IMR-90 (cell line): ENCODE measurements at regions of chr9 and their contacts with region 1.

Region 1: GRCh38 chr9:115328228-115328627 is 210.3 kb upstream of the TNC start:
- DNase-seq: peak; percentile 76
- ATAC-seq: peak; percentile 75
- H3K4me3 ChIP-seq: no peak overlapping the region
- H3K27ac ChIP-seq: peak overlapping the region; percentile 48; the same call in 1 of the 2 replicates
- H3K4me1 ChIP-seq: peaks cover 6% of the 10 kb centered on the region
- H3K27me3 ChIP-seq: no peaks in the 10 kb centered on the region
- CTCF ChIP-seq: no peak
- POLR2A ChIP-seq: no peak
- RAD21 ChIP-seq: no peak

Region 2: GRCh38 chr9:115164511-115164974 is 163.7 kb before region 1 on chr9:
- CTCF ChIA-PET with region 1: no interaction called
- POLR2A ChIA-PET with region 1: no interaction called
- dilution Hi-C with region 1: no loop called
- in situ Hi-C with region 1: no loop called
- intact Hi-C with region 1: no loop called
- DNase-seq: peak; percentile 33
- ATAC-seq: no peak
- H3K4me3 ChIP-seq: no peak overlapping the region
- H3K27ac ChIP-seq: no peak overlapping the region
- H3K4me1 ChIP-seq: peaks cover 5% of the 10 kb centered on the region; the same call in 1 of the 2 replicates
- H3K27me3 ChIP-seq: no peaks in the 10 kb centered on the region
- CTCF ChIP-seq: no peak
- POLR2A ChIP-seq: no peak
- RAD21 ChIP-seq: no peak

Region 3: DNA sequence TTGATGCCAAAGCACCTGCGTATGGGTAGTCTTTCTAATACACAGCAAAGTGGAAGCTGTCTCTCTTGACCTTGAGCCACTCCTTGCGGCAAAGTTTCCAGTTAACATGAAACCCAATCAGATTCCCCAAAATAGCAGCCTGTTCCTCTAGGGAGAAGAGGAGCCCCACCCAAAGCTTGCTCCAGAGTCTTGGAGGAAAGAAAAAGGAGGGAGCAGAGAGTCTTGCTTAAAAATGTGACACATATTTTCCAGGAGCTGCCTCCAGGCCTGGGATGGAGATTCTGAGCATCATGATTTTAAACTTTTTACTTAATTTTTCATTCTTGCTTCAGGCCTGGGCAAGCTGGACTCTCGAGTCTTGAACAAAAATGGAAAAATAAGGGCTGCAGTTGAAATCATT is 13.2 kb after region 1 on chr9:
- CTCF ChIA-PET with region 1: no interaction called
- POLR2A ChIA-PET with region 1: interaction called, 12 read pairs
- dilution Hi-C with region 1: no loop called
- in situ Hi-C with region 1: no loop called
- intact Hi-C with region 1: no loop called
- DNase-seq: no peak
- ATAC-seq: no peak
- H3K4me3 ChIP-seq: no peak overlapping the region
- H3K27ac ChIP-seq: no peak overlapping the region
- H3K4me1 ChIP-seq: no peaks in the 10 kb centered on the region
- H3K27me3 ChIP-seq: peaks cover 13% of the 10 kb centered on the region
- CTCF ChIP-seq: no peak
- POLR2A ChIP-seq: no peak
- RAD21 ChIP-seq: no peak

Region 4: DNA sequence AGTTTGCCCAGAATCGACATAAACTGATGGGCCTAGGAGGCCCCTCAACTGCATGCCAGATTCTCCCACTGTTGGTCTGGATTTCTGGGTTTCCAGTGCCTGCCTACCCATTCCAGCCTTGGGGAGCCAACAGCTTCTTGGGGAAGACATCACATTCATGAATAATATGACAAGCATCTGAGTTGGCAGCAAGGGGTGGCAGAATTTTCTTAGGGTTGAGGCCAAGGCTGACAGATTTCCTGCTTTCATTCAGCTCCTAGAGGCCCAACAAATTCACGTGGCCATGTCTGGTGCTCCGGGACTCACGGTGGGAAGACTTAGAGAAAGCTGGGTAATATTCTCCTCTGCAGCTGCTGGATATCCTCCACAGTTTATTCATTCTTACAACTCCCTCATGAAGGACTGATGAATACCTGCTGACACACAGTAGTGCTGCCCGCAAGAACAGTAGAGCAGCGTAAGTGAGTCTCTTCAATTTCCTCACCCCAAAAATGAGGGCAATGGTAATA is 94.8 kb after region 1 on chr9:
- CTCF ChIA-PET with region 1: no interaction called
- POLR2A ChIA-PET with region 1: no interaction called
- dilution Hi-C with region 1: no loop called
- in situ Hi-C with region 1: no loop called
- intact Hi-C with region 1: no loop called
- DNase-seq: no peak
- ATAC-seq: no peak
- H3K4me3 ChIP-seq: no peak overlapping the region
- H3K27ac ChIP-seq: no peak overlapping the region
- H3K4me1 ChIP-seq: no peaks in the 10 kb centered on the region
- H3K27me3 ChIP-seq: no peaks in the 10 kb centered on the region
- CTCF ChIP-seq: no peak
- POLR2A ChIP-seq: no peak
- RAD21 ChIP-seq: no peak